ENCODE measurements at regions of chr21 and their contacts with region 1.

Region 1: DNA sequence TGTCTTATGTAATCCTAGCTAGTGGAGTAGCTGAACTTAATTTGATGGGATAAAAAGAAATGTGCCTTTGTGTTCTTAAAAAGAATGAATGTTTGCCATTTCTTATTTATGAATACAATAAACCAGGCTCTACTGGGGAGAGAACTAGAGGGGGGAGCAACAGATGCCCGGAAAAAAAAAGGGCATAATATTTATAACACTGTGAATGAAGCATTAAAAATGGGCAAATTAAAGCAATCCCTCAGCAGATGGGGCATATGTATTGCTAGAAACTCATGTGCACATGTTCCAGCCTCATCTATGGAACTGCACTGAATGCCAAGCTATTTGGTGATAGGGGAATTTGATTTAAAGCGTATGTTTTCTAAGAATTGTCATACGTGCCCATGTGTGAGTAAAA is 42.3 kb upstream of the KCNJ6 start:
- DNase-seq: no peak
- ATAC-seq: no peak

Region 2: DNA sequence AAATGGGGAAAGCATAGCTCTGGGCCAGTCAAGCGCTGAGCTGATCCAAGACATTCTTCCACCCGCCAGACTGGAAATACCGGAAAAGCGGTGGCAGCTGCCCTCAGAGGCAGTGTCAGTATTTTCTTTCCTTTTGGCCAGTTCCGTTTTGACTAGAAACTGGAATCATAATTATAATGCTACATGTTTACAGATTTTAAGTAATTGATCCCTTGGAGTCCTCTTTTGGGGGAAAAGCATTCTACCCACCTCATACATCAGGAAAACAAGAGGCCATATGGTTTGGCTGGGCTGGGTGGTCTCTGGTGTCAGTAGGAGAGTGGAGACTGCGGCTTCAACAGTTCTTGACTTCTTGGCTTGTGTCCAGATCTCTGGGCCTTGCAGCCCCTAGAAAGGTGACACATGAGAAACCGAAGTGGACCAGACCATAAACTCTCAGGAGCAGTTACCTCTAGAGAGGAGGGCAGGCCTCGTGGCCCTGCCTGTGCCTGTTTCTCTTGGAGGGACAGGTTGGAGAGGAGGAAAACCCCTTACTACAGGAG is 1448.4 kb before region 1 on chr21:
- intact Hi-C with region 1: loop called (anchors 10 kb)
- DNase-seq: no peak
- ATAC-seq: no peak

Region 3: GRCh38 chr21:36976882-36977651 is 981.5 kb before region 1 on chr21:
- intact Hi-C with region 1: no loop called
- DNase-seq: no peak
- ATAC-seq: peak; percentile 77

Measured in sciatic nerve (tissue), 2 donors.